SK-N-SH (cell line): ENCODE measurements at regions of chr3 and their contacts with region 1.

Region 1: DNA sequence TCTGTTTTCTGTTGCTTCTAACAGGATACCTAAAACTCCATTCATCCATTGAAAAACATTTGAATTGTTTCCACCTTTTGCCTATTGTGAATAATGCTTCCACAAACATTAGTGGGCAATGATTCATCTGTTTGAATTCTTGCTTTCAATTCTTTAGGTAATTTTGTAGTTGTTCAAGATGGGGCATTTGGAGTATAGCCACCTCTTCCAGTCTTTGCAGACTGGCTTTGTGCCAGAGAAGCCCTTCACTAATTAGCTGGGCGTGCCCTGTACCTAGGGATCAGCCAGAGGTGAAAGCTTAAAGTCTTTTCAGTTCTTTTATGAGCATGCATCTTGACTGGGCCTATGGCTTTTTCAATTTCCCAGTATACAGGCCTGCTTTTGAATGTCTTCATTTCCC is 10.9 kb downstream of the RTP1 start:
- DNase-seq: no peak
- H3K4me3 ChIP-seq: no peak overlapping the region
- H3K27ac ChIP-seq: no peak overlapping the region
- H3K4me1 ChIP-seq: peaks cover 0 to 7% of the 10 kb centered on the region in 2 experiments; a peak in 1 of 4 replicates
- H3K27me3 ChIP-seq: peaks cover 21% of the 10 kb centered on the region; the same call in 1 of the 2 replicates
- CTCF ChIP-seq: no peak
- EP300 ChIP-seq: no peak
- RAD21 ChIP-seq: no peak

Region 2: DNA sequence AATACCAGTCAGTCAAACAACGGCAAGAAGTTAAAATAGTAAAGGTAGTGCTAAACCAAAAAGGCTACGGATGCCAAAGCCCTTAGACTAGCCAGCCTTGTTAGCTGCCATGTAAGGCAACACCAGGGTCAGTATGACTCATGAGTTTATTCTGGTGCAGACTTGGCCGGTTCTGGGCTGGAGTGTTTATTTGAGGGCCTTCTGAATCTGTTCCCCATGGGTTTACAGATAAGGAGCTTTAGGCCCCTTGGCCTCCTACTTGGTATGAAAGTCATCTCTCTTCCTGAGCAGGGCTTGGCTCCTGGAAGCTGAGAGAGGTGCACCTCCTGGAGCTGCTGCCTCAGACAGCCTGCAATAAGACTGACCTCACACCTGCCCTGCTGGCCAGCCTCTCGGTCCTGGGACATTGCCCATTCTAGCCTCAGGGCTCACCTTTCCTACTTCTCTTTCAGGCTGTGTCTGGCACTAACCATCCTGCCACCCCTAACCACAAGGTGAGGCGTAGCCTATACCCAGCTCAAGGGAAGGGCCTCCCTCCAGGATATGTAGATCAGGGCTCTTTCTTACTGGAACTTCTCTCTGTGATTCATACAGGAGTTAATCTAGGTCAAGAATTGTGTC is 21.2 kb before region 1 on chr3:
- CTCF ChIA-PET with region 1: no interaction called
- POLR2A ChIA-PET with region 1: no interaction called
- DNase-seq: no peak
- H3K4me3 ChIP-seq: no peak overlapping the region
- H3K27ac ChIP-seq: no peak overlapping the region
- H3K4me1 ChIP-seq: peaks cover 0 to 13% of the 10 kb centered on the region in 2 experiments; a peak in 1 of 4 replicates
- H3K27me3 ChIP-seq: no peaks in the 10 kb centered on the region
- CTCF ChIP-seq: no peak
- EP300 ChIP-seq: no peak
- RAD21 ChIP-seq: no peak

Region 3: DNA sequence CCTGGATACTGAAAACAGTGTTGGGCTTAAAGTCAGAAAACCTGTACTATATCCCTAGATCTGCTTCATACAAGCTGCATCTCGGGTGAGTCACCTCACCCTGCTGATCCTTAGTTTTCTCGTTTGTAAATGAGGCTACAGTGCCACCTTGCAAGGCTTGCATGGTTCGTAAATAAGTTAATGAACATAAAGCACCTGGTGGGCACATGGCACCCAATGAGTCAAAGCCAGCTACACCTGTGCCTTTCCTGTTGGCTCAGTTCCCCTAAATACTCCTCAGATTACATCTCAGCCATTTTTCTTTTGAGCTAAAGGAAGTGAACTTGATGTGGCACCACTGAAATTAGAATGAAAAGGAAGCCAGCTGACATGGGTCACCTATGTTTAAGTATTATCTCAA is 15.6 kb after region 1 on chr3:
- CTCF ChIA-PET with region 1: interaction called, 10 read pairs
- POLR2A ChIA-PET with region 1: no interaction called
- DNase-seq: no peak
- H3K4me3 ChIP-seq: no peak overlapping the region
- H3K27ac ChIP-seq: no peak overlapping the region
- H3K4me1 ChIP-seq: no peaks in the 10 kb centered on the region
- H3K27me3 ChIP-seq: peaks cover 11% of the 10 kb centered on the region
- CTCF ChIP-seq: no peak
- EP300 ChIP-seq: no peak
- RAD21 ChIP-seq: no peak